Kidney (tissue), 22 donors: ENCODE measurements at regions of chr22 and their contacts with region 1.

Region 1: DNA sequence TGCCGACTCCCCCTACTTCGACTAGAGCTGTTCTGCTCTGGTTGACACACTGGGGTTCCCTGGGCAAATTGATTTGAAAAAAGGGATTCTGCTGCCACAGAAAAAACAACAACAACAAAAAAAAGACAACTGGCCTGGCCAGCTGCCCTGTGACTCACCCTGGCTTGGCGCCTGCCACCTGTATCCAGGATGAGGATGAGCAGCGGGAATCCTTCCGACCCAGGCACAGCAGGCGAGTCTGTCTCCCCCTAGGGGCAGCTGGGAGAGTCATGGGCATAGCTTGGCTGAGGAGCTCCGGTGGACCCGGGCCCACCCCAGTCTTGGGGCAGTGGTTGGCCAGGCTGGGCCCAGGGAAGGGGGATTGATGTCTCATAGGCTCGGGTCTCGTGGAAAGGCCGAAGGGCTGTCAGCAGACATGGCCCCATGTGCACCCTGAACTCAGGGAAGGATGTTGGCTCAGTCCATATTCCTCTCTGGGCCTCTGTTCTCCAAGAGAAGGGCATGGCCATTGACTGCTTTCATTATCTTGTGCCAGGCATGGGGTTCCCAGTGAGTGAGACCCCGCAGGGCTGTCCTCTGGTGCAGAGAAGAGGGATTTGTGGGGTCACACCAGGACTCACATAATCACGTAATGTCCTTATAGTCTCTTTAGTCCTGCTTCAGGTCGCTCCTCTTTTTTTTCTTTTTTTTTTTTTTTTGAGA is 10.4 kb upstream of the SUN2 start:
- DNase-seq: peak in 4 of 5 donors; percentile 66 to 75 (median 72)
- H3K4me3 ChIP-seq: no peak overlapping the region
- H3K27ac ChIP-seq: no peak overlapping the region
- H3K4me1 ChIP-seq: peaks cover 0 to 3% (median 0%) of the 10 kb centered on the region in 3 donors
- H3K27me3 ChIP-seq: no peaks in the 10 kb centered on the region
- CTCF ChIP-seq: peak; percentile 70

Region 2: GRCh38 chr22:38843201-38843715 is 77.0 kb after region 1 on chr22:
- intact Hi-C with region 1: loop called (anchors 10 kb)
- DNase-seq: peak in 4 of 5 donors; percentile 79 to 90 (median 86)
- H3K4me3 ChIP-seq: peak overlapping the region in 1 of 3 donors; percentile 28
- H3K27ac ChIP-seq: no peak overlapping the region
- H3K4me1 ChIP-seq: peaks cover 0 to 5% (median 0%) of the 10 kb centered on the region in 3 donors
- H3K27me3 ChIP-seq: no peaks in the 10 kb centered on the region
- CTCF ChIP-seq: peak; percentile 13